Right ventricle myocardium inferior (tissue), 1 donor: ENCODE measurements at regions of chr18 and their contacts with region 1.

Region 1: DNA sequence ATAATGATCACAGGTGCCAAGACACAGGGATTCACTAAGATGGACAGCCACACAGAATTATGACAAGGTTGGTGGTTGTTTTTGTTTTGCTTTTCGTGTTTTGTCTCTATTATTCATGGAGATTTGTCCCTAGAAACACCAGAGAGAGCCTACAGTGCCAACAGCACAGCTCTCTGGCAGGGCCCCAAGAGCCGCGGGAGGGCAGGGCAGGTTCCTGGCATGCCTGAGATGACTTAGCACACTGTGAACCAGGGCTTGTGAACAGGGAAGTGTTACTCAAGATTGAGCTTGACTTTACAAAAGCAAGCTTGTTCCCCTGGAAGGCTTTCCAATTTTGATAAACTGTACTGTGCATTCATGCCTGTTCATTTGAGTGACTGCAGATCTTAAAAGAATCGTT is 437.4 kb upstream of the SALL3 start:
- DNase-seq: peak; percentile 85
- ATAC-seq: peak; percentile 94

Region 2: DNA sequence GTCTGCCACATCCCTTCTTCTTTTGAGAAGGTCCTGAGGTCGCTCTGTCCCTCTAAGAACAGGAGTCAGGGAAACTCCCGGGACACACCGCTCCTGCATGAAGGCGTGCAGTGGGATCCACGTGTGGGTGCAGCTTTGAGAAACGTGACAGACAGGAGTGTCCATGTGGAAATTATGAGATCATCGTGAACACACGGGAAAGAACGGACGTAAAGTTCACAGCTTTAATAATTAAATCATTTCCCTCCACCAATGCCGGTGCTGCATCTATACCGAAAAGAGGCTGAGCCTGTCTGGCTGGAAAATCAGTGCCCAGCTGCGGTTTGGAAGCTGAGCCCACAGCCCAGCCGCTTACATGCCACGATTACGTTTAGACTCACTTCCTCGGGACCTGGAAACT is 65.0 kb after region 1 on chr18:
- intact Hi-C with region 1: loop called (anchors 10 kb)
- DNase-seq: no peak
- ATAC-seq: no peak

Region 3: DNA sequence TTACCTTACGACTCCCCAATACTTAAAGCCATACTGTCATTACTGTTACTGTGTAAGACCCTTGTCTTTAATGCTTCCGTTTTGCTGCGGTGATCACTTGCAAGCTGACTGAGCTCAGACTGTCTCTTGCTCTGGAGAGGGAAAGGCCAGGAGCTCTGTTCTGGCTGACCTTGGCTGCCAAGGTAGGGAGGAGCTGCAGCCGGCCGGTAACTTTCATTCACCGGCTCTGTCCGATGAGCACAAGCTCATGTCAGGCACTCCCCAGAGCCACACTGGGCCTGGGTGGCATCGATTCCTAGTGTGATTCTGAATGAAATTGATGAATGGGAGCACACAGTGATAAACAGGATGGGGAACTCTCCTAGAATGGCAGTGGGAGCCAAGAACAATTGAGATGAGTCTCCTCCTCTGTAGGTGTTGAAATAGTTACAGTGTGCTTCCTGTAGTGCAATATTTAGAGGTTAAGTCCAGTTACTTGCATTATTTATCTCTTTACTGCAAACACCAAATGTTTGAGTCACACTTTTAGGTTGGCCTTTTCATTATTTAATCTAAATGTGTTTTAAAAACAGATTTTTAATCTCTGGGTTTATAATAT is 627.9 kb after region 1 on chr18:
- intact Hi-C with region 1: loop called (anchors 10 kb)
- DNase-seq: no peak
- ATAC-seq: no peak